HepG2 (cell line): ENCODE measurements at regions of chr1 and their contacts with region 1.

Region 1: GRCh38 chr1:119361620-119362344 is 6.8 kb upstream of the HAO2 start:
- DNase-seq: no peak
- ATAC-seq: no peak
- H3K4me3 ChIP-seq: no peak overlapping the region
- H3K27ac ChIP-seq: no peak overlapping the region
- H3K4me1 ChIP-seq: peaks cover 62% of the 10 kb centered on the region
- H3K27me3 ChIP-seq: no peaks in the 10 kb centered on the region
- CTCF ChIP-seq: no peak
- EP300 ChIP-seq: no peak
- POLR2A ChIP-seq: no peak
- RAD21 ChIP-seq: no peak

Region 2: DNA sequence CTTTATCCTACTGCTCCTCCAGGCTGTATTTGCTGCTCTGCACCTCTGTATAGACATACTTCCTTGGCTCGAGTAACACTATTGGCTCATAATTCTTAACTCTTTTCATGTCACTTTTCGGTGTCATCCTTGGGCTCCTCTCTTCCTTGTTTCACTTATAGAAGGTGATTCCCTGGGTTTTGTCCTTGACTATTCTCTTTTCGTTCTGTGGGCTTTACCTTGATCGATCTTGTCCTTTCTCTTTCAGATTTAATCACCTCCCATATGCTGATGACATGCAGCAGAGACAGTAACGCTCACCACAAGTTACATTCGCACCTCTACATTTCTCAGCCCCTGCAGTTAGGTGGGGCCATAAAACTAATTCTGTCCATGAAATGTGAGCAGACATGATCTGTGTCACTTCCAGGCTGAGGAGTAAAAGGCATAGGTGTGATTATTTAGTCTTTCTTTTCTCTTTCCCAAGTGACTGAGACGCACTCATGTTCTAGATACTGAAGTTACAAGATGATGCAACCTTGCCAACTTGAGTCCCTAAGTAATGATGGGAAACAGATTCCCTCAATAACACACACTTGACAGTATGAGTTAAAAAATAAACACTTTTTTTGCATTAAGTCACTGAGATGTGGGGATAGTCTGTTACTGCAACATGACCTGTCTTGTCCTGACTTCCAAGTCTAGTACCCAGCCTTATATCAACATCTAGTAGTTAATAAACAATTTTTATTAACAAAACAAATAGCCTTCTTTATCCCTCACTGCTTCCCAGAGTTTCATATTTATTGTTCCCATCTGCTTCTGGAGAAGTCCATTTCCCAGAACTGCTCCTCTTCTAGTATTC is 43.1 kb before region 1 on chr1:
- CTCF ChIA-PET with region 1: interaction called, 16 read pairs
- POLR2A ChIA-PET with region 1: no interaction called
- in situ Hi-C with region 1: no loop called
- intact Hi-C with region 1: loop called (anchors 2 kb)
- DNase-seq: no peak
- ATAC-seq: no peak
- H3K4me3 ChIP-seq: no peak overlapping the region
- H3K27ac ChIP-seq: no peak overlapping the region
- H3K4me1 ChIP-seq: no peaks in the 10 kb centered on the region
- H3K27me3 ChIP-seq: no peaks in the 10 kb centered on the region
- CTCF ChIP-seq: no peak
- EP300 ChIP-seq: no peak
- POLR2A ChIP-seq: no peak
- RAD21 ChIP-seq: no peak

Region 3: GRCh38 chr1:119336848-119337247 is 24.9 kb before region 1 on chr1:
- CTCF ChIA-PET with region 1: no interaction called
- POLR2A ChIA-PET with region 1: no interaction called
- in situ Hi-C with region 1: no loop called
- intact Hi-C with region 1: loop called (anchors 2 kb)
- DNase-seq: no peak
- ATAC-seq: no peak
- H3K4me3 ChIP-seq: no peak overlapping the region
- H3K27ac ChIP-seq: peak overlapping the region; percentile 90
- H3K4me1 ChIP-seq: peaks cover 64% of the 10 kb centered on the region
- H3K27me3 ChIP-seq: no peaks in the 10 kb centered on the region
- CTCF ChIP-seq: no peak
- EP300 ChIP-seq: no peak
- POLR2A ChIP-seq: no peak
- RAD21 ChIP-seq: no peak

Region 4: GRCh38 chr1:119453021-119453420 is 91.2 kb after region 1 on chr1:
- CTCF ChIA-PET with region 1: no interaction called
- POLR2A ChIA-PET with region 1: no interaction called
- in situ Hi-C with region 1: no loop called
- intact Hi-C with region 1: no loop called
- DNase-seq: no peak
- ATAC-seq: no peak
- H3K4me3 ChIP-seq: no peak overlapping the region
- H3K27ac ChIP-seq: no peak overlapping the region
- H3K4me1 ChIP-seq: 0 out of 2 replicates have a peak, but pooled peaks cover 7% of the 10 kb centered on the region
- H3K27me3 ChIP-seq: no peaks in the 10 kb centered on the region
- CTCF ChIP-seq: no peak
- EP300 ChIP-seq: no peak
- POLR2A ChIP-seq: no peak
- RAD21 ChIP-seq: no peak